ENCODE measurements at regions of chrX and their contacts with region 1.

Region 1: DNA sequence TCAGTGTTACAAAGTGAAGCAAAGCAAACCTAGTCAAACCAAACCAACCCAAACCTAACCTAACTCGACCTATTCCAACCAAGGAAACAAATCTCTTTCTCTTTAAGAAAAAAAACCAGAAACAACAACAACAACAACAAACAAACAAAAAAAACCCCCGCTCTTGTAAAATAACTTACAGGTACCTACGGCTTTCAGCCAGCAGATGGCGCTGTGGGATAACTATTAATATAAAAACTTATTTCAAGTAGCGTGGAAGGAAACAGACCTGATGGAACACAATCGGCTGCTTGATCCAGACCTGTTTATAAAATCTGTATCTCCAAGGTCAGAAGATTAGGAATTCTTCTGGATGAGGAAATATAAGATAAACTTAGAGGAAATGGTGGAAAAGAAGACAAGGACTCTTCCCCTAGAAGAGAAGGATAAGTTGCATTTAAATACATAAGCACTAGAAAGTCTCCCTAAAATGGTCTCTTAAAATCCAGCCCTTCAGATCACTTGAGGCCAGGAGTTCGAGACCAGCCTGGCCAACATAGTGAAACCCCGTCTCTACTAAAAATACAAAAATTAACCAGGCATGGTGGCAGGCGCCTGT is 34.4 kb upstream of the CDKL5 start:
- DNase-seq: peak; percentile 14
- ATAC-seq: no peak
- H3K4me3 ChIP-seq: no peak overlapping the region
- H3K27ac ChIP-seq: no peak overlapping the region
- H3K4me1 ChIP-seq: 0 out of 2 replicates have a peak, but pooled peaks cover 10% of the 10 kb centered on the region
- H3K27me3 ChIP-seq: no peaks in the 10 kb centered on the region
- CTCF ChIP-seq: peak; percentile 56
- EP300 ChIP-seq: no peak
- POLR2A ChIP-seq: no peak
- RAD21 ChIP-seq: peak; percentile 24; the same call in 1 of the 2 replicates

Region 2: DNA sequence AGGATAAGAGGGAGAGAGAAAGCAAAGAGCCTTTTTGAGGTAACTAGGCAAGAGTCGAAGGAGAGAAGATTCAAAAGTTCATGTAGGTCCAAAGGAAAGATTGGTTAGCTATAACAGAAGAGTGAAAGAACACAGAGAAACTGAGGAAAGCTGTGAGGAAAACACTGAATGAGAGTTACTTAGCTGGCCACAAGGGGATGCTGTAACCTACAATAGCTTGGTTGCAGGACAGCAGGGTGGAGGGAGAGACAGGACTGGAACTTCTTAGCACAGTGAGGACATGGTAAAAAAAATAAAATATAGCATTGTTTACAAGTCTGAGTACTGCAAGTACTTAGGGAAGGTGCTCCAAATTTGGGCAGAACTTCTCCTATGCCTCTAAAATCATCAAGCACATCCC is 578.3 kb before region 1 on chrX:
- CTCF ChIA-PET with region 1: no interaction called
- POLR2A ChIA-PET with region 1: no interaction called
- in situ Hi-C with region 1: loop called (anchors 25 kb)
- intact Hi-C with region 1: no loop called
- DNase-seq: no peak
- ATAC-seq: no peak
- H3K4me3 ChIP-seq: no peak overlapping the region
- H3K27ac ChIP-seq: no peak overlapping the region
- H3K4me1 ChIP-seq: no peaks in the 10 kb centered on the region
- H3K27me3 ChIP-seq: no peaks in the 10 kb centered on the region; a peak in 1 of 5 replicates
- CTCF ChIP-seq: peak; percentile 39
- EP300 ChIP-seq: no peak
- POLR2A ChIP-seq: no peak
- RAD21 ChIP-seq: no peak

Region 3: GRCh38 chrX:17944833-17945497 is 446.1 kb before region 1 on chrX:
- CTCF ChIA-PET with region 1: no interaction called
- POLR2A ChIA-PET with region 1: no interaction called
- in situ Hi-C with region 1: loop called (anchors 25 kb)
- intact Hi-C with region 1: no loop called
- DNase-seq: peak; percentile 7
- ATAC-seq: no peak
- H3K4me3 ChIP-seq: no peak overlapping the region
- H3K27ac ChIP-seq: no peak overlapping the region
- H3K4me1 ChIP-seq: no peaks in the 10 kb centered on the region
- H3K27me3 ChIP-seq: no peaks in the 10 kb centered on the region
- CTCF ChIP-seq: peak; percentile 60
- EP300 ChIP-seq: no peak
- POLR2A ChIP-seq: no peak
- RAD21 ChIP-seq: no peak

Region 4: GRCh38 chrX:18674788-18675735 is 284.0 kb after region 1 on chrX:
- CTCF ChIA-PET with region 1: no interaction called
- POLR2A ChIA-PET with region 1: no interaction called
- in situ Hi-C with region 1: no loop called
- intact Hi-C with region 1: loop called (anchors 10 kb)
- DNase-seq: peak; percentile 58
- ATAC-seq: peak; percentile 60
- H3K4me3 ChIP-seq: peak overlapping the region; percentile 72 to 78 (median 75)
- H3K27ac ChIP-seq: peak overlapping the region; percentile 57
- H3K4me1 ChIP-seq: peaks cover 13% of the 10 kb centered on the region
- H3K27me3 ChIP-seq: no peaks in the 10 kb centered on the region
- CTCF ChIP-seq: no peak
- EP300 ChIP-seq: no peak
- POLR2A ChIP-seq: 0 out of 4 replicates have a peak, but pooled peaks of 1 of the 2 experiments have one; percentile 0
- RAD21 ChIP-seq: 0 out of 2 replicates have a peak, but pooled peaks have one; percentile 17

Region 5: GRCh38 chrX:18886344-18887161 is 495.5 kb after region 1 on chrX:
- CTCF ChIA-PET with region 1: no interaction called
- POLR2A ChIA-PET with region 1: no interaction called
- in situ Hi-C with region 1: loop called (anchors 10 kb)
- intact Hi-C with region 1: loop called (anchors 5 kb)
- DNase-seq: peak; percentile 22
- ATAC-seq: peak; percentile 52
- H3K4me3 ChIP-seq: peak overlapping the region in 2 of 3 experiments; percentile 39 to 59; a peak in 4 of 6 replicates
- H3K27ac ChIP-seq: no peak overlapping the region
- H3K4me1 ChIP-seq: peaks cover 39% of the 10 kb centered on the region
- H3K27me3 ChIP-seq: no peaks in the 10 kb centered on the region
- CTCF ChIP-seq: peak; percentile 62
- EP300 ChIP-seq: no peak
- POLR2A ChIP-seq: peak in 1 of 2 experiments; percentile 21; a peak in 1 of 4 replicates
- RAD21 ChIP-seq: 0 out of 2 replicates have a peak, but pooled peaks have one; percentile 8

Region 6: DNA sequence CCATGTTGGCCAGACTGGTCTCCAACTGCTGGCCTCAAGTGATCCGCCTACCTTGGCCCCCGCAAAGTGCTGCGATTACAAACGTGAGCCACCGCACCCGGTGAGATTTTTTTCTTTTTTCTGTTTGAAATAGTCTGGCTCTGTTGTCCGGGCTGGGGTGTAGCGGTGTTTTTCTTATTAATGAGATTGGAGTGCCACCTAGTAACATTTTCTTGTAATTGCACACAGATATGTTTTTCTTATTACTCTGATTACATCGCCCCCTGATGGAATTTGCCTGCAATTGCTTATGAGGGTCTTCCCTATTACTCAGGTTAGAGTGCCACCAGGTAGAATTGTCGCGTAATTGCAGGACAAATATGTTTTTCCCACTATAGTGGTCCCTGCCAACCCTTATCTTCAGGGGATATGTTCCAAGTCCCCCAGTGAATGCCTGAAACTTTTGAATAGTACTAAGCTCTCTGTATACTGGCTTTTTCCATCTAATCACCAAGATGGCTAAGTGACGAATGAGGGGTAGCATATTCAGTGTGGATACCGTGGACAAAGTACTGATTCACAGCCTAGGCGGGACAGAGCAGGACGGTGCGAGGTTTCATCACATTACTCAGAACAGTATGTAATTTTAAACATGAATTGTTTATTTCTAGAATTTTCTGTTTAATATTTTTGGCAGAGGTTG is 944.0 kb after region 1 on chrX:
- CTCF ChIA-PET with region 1: interaction called, 20 read pairs
- POLR2A ChIA-PET with region 1: no interaction called
- in situ Hi-C with region 1: loop called (anchors 5 kb)
- intact Hi-C with region 1: loop called (anchors 1 kb)
- DNase-seq: peak; percentile 75
- ATAC-seq: peak; percentile 66
- H3K4me3 ChIP-seq: no peak overlapping the region
- H3K27ac ChIP-seq: no peak overlapping the region
- H3K4me1 ChIP-seq: no peaks in the 10 kb centered on the region
- H3K27me3 ChIP-seq: no peaks in the 10 kb centered on the region; a peak in 1 of 5 replicates
- CTCF ChIP-seq: peak; percentile 60
- EP300 ChIP-seq: no peak
- POLR2A ChIP-seq: no peak
- RAD21 ChIP-seq: no peak; the same call in 1 of the 2 replicates